CD4-positive, alpha-beta memory T cell (primary cell): ENCODE measurements at regions of chr16 and their contacts with region 1.

Region 1: GRCh38 chr16:85688586-85689284 is at the start of gene GINS2:
- DNase-seq: peak; percentile 88 to 91 (median 90)
- H3K4me3 ChIP-seq: peak within 1 kb of the TSS; percentile 23 to 75
- H3K4me3 Mint-ChIP-seq: peak within 1 kb of the TSS; percentile 71 to 85 (median 82)
- H3K27ac ChIP-seq: peak within 1 kb of the TSS; percentile 34
- H3K27ac Mint-ChIP-seq: peak within 1 kb of the TSS in 4 of 7 donors; percentile 53 to 76 (median 68)
- H3K4me1 ChIP-seq: peaks cover 23% of the 10 kb centered on the region
- H3K4me1 Mint-ChIP-seq: peaks cover 0 to 14% (median 8%) of the 10 kb centered on the region in 4 donors
- H3K27me3 ChIP-seq: no peaks in the 10 kb centered on the region
- H3K27me3 Mint-ChIP-seq: peaks cover 0 to 2% of the 10 kb centered on the region in 2 donors
- total RNA-seq, gene GINS2: 1.2 to 1.4 TPM

Region 2: GRCh38 chr16:85659805-85660495 is 28.8 kb before region 1 on chr16:
- CTCF ChIA-PET with region 1: no interaction called
- POLR2A ChIA-PET with region 1: no interaction called
- intact Hi-C with region 1: loop called (anchors 1 kb)
- DNase-seq: peak; percentile 35 to 61 (median 44)
- H3K4me3 ChIP-seq: no peak overlapping the region
- H3K4me3 Mint-ChIP-seq: no peak overlapping the region
- H3K27ac ChIP-seq: no peak overlapping the region
- H3K27ac Mint-ChIP-seq: peak overlapping the region in 4 of 7 donors; percentile 19 to 89 (median 52)
- H3K4me1 ChIP-seq: no peaks in the 10 kb centered on the region
- H3K4me1 Mint-ChIP-seq: no peaks in the 10 kb centered on the region
- H3K27me3 ChIP-seq: no peaks in the 10 kb centered on the region
- H3K27me3 Mint-ChIP-seq: no peaks in the 10 kb centered on the region

Region 3: DNA sequence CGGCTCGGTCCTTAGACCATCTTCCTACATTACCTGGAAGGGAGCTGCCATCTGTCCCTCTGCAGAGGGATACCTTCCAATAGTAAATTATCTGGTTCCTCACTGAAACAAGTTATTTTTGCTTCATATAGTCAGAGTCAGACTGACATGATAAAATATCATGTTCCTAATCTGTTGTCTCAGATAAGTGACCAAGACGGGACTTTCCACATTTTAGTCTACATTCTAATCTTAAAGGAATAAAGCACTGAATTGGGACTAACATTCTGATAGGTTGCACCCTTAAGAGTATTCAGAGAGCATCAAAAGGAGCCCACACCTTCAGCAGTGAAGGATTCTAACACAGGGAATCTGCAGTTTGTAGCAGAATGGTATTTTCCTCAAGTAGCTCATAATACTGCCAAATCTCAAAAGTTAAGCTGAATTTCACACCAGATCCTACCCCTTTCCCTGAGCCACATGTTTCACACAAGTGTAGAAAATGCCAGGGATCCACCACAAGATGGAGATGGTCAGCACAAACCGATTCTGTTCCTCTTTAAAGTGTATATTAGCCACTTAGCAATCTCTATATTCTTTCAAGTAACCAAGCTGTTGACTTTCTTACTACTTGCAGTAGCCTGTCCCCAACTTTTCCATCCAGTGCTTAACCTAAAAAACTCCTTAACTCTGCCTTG is 13.3 kb before region 1 on chr16:
- CTCF ChIA-PET with region 1: interaction called, 4 read pairs
- POLR2A ChIA-PET with region 1: interaction called, 3 read pairs
- intact Hi-C with region 1: loop called (anchors 1 kb)
- DNase-seq: no peak
- H3K4me3 ChIP-seq: no peak overlapping the region
- H3K4me3 Mint-ChIP-seq: no peak overlapping the region
- H3K27ac ChIP-seq: no peak overlapping the region
- H3K27ac Mint-ChIP-seq: peak overlapping the region in 2 of 7 donors; percentile 29 to 66
- H3K4me1 ChIP-seq: peaks cover 2% of the 10 kb centered on the region
- H3K4me1 Mint-ChIP-seq: peaks cover 2 to 10% (median 6%) of the 10 kb centered on the region in 4 donors
- H3K27me3 ChIP-seq: no peaks in the 10 kb centered on the region
- H3K27me3 Mint-ChIP-seq: no peaks in the 10 kb centered on the region

Region 4: GRCh38 chr16:85735225-85735635 is 46.5 kb after region 1 on chr16:
- CTCF ChIA-PET with region 1: no interaction called
- POLR2A ChIA-PET with region 1: no interaction called
- intact Hi-C with region 1: loop called (anchors 1 kb)
- DNase-seq: peak; percentile 61 to 80 (median 70)
- H3K4me3 ChIP-seq: peak overlapping the region in 1 of 2 donors; percentile 51
- H3K4me3 Mint-ChIP-seq: peak overlapping the region; percentile 66 to 81 (median 74)
- H3K27ac ChIP-seq: peak overlapping the region; percentile 17
- H3K27ac Mint-ChIP-seq: peak overlapping the region; percentile 65 to 89 (median 79)
- H3K4me1 ChIP-seq: peaks cover 30% of the 10 kb centered on the region
- H3K4me1 Mint-ChIP-seq: peaks cover 10 to 34% (median 17%) of the 10 kb centered on the region in 4 donors
- H3K27me3 ChIP-seq: no peaks in the 10 kb centered on the region
- H3K27me3 Mint-ChIP-seq: no peaks in the 10 kb centered on the region

Region 5: GRCh38 chr16:85799497-85800337 is 111.0 kb after region 1 on chr16 and contains the starts of genes COX4I1 and EMC8:
- CTCF ChIA-PET with region 1: no interaction called
- POLR2A ChIA-PET with region 1: no interaction called
- intact Hi-C with region 1: loop called (anchors 2 kb)
- DNase-seq: peak; percentile 90 to 92 (median 91)
- H3K4me3 ChIP-seq: peak within 1 kb of the TSS; percentile 58 to 67
- H3K4me3 Mint-ChIP-seq: peak within 1 kb of the TSS; percentile 87 to 96 (median 90)
- H3K27ac ChIP-seq: peak within 1 kb of the TSS; percentile 97
- H3K27ac Mint-ChIP-seq: peak within 1 kb of the TSS; percentile 94 to 97 (median 97)
- H3K4me1 ChIP-seq: peaks cover 29% of the 10 kb centered on the region
- H3K4me1 Mint-ChIP-seq: peaks cover 39 to 66% (median 53%) of the 10 kb centered on the region in 4 donors
- H3K27me3 ChIP-seq: no peaks in the 10 kb centered on the region
- H3K27me3 Mint-ChIP-seq: no peaks in the 10 kb centered on the region
- total RNA-seq, gene COX4I1: 490 to 521 TPM
- total RNA-seq, gene EMC8: 22.7 to 22.8 TPM